ENCODE measurements at regions of chr5 and their contacts with region 1.

Region 1: DNA sequence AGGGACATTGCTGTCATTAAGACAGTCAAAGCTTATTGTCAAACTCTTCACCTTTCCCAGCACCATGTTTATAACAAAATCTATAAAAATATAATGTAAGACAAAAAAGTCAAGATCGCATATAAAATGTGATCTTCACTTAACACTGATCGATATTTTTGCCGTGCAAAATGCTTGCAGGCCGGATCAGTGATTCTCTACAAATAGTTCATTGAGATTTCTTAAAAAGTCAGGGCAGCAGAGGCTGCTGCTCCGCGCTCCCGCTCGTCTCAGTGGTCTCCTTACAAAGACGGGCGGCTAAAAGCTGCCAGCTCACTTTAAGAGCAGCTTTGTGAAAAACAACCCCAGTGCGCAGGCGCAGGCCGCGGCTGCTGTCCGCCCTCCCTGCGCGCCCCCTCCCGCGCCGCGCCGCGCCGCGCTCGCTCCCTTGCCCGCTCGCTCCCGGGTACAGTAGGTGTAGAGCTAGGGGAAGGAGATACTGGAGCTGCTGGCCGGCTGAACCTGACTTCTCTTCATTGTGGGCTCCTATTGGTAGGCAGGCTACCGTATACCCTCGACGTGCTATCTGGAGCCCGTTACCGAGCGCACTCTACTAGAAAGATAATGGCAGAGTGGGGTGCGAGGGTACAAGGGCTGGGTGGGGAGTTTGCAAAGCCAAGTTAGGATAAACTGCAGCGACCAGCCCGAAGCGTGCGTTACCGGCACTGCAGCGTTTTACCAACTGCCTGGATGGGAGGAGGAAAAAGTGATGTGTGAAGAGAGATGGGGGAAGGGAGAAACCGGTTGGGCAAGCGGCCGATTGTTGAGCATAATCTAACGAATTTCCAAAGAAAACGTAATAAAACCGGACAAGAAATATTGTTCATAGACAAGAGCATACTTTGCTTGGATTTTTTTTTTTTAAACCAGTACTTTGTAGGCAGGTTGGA is at the start of gene ARRDC3:
- DNase-seq: peak; percentile 96
- H3K4me3 Mint-ChIP-seq: peak within 1 kb of the TSS; percentile 98
- H3K27ac Mint-ChIP-seq: peak within 1 kb of the TSS; percentile 100
- H3K4me1 Mint-ChIP-seq: peaks cover 35% of the 10 kb centered on the region
- H3K27me3 Mint-ChIP-seq: peaks cover 3% of the 10 kb centered on the region
- total RNA-seq, gene ARRDC3: 10.5 and 11.5 TPM in 2 replicates

Region 2: GRCh38 chr5:90474235-90475109 is 908.8 kb before region 1 on chr5 and contains the starts of genes MBLAC2 and POLR3G:
- intact Hi-C with region 1: loop called (anchors 1 kb)
- DNase-seq: peak; percentile 87
- H3K4me3 Mint-ChIP-seq: peak within 1 kb of the TSS; percentile 98
- H3K27ac Mint-ChIP-seq: peak within 1 kb of the TSS; percentile 97
- H3K4me1 Mint-ChIP-seq: peaks cover 44% of the 10 kb centered on the region
- H3K27me3 Mint-ChIP-seq: no peaks in the 10 kb centered on the region
- total RNA-seq, gene MBLAC2: 5.0 and 5.7 TPM in 2 replicates
- total RNA-seq, gene POLR3G: 18.4 and 22.1 TPM in 2 replicates

Region 3: GRCh38 chr5:90932052-90932699 is 451.1 kb before region 1 on chr5:
- intact Hi-C with region 1: loop called (anchors 1 kb)
- DNase-seq: no peak
- H3K4me3 Mint-ChIP-seq: no peak overlapping the region
- H3K27ac Mint-ChIP-seq: no peak overlapping the region
- H3K4me1 Mint-ChIP-seq: peaks cover 5% of the 10 kb centered on the region
- H3K27me3 Mint-ChIP-seq: peaks cover 6% of the 10 kb centered on the region

Region 4: DNA sequence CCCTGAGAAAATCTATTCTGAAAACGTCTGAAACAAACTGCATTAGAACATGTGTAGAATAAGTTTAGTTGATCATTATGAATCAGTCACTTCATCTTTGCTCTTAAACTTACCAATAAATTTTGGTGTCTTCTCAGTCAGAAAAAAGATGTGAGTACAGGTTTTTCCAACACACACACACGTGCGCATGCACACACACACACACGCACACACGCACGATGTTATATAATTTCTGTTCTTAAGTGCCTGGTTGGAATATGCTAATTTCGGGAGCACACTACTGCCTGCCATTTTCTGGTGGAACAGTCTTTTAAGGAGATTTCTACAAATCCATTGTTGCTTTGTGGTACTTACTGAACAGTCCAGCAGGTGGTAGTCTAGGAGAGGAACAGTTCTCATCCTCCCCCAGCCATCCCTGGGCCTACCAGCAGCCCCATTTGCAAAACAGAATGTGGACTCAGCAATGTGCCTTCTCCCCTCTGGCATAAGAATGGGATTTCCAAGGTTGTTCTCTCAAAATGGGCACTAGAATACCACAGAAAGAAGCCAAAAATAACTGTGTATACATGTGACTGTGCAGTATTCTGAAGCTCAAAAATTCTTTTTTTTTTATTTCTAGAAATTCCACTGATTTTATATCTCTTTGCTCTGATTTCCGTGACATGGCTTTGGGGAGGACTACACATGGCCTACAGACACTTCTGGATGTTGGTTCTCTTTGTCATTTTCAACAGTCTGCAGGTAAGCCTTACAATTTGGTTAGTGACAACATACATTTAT is 281.5 kb before region 1 on chr5:
- intact Hi-C with region 1: loop called (anchors 1 kb)
- DNase-seq: peak; percentile 25
- H3K4me3 Mint-ChIP-seq: no peak overlapping the region
- H3K27ac Mint-ChIP-seq: no peak overlapping the region
- H3K4me1 Mint-ChIP-seq: no peaks in the 10 kb centered on the region
- H3K27me3 Mint-ChIP-seq: peaks cover 12% of the 10 kb centered on the region

Region 5: GRCh38 chr5:91225848-91226686 is 157.2 kb before region 1 on chr5:
- intact Hi-C with region 1: loop called (anchors 1 kb)
- DNase-seq: peak; percentile 33
- H3K4me3 Mint-ChIP-seq: no peak overlapping the region
- H3K27ac Mint-ChIP-seq: no peak overlapping the region
- H3K4me1 Mint-ChIP-seq: peaks cover 6% of the 10 kb centered on the region
- H3K27me3 Mint-ChIP-seq: peaks cover 20% of the 10 kb centered on the region

Region 6: DNA sequence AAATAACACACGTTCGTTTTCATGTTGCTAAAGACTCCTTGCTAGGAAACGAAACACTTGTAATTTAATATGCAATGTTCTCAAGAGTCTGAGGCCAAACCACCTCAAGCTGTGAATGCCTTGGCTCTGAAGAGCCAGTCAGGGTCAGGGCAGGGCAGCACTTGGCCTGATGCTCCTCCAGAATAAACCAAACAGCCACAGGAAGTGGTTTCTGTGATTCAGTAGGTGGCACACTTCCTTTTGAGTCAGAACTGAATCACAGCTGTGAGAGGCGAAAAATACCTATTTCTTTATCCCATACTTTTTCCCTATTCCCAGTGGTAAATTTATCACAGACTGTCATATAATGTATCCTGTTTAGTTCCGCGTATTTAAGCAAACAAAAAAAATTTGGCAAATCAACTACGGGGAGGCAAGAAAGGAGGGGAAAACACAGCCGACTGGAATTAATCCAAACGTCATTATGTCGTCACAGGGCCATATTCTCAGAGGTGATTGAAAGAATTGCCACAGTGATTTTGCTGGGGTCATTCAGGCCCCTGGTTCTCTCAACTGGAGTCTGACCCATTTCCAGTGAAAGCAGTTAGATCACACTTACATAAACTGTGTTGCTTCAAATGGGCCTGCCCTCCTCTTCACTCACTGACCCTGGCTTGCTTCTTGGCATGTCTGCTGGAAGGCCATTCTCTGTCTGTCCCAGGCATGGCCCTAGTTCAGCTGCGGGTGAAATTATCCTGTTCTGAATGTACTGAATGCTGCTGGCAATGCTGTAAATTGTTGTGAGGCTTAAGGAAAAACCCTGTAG is 71.4 kb before region 1 on chr5:
- intact Hi-C with region 1: loop called (anchors 1 kb)
- DNase-seq: peak; percentile 60
- H3K4me3 Mint-ChIP-seq: peak overlapping the region; percentile 77
- H3K27ac Mint-ChIP-seq: peak overlapping the region; percentile 87
- H3K4me1 Mint-ChIP-seq: peaks cover 46% of the 10 kb centered on the region
- H3K27me3 Mint-ChIP-seq: no peaks in the 10 kb centered on the region

Region 7: GRCh38 chr5:91419571-91420537 is 36.6 kb after region 1 on chr5:
- intact Hi-C with region 1: loop called (anchors 1 kb)
- DNase-seq: peak; percentile 40
- H3K4me3 Mint-ChIP-seq: no peak overlapping the region
- H3K27ac Mint-ChIP-seq: no peak overlapping the region
- H3K4me1 Mint-ChIP-seq: peaks cover 4% of the 10 kb centered on the region
- H3K27me3 Mint-ChIP-seq: peaks cover under 1% of the 10 kb centered on the region

Region 8: GRCh38 chr5:92106808-92107207 is 723.5 kb after region 1 on chr5:
- intact Hi-C with region 1: no loop called
- DNase-seq: no peak
- H3K4me3 Mint-ChIP-seq: no peak overlapping the region
- H3K27ac Mint-ChIP-seq: no peak overlapping the region
- H3K4me1 Mint-ChIP-seq: no peaks in the 10 kb centered on the region
- H3K27me3 Mint-ChIP-seq: no peaks in the 10 kb centered on the region

Region 9: DNA sequence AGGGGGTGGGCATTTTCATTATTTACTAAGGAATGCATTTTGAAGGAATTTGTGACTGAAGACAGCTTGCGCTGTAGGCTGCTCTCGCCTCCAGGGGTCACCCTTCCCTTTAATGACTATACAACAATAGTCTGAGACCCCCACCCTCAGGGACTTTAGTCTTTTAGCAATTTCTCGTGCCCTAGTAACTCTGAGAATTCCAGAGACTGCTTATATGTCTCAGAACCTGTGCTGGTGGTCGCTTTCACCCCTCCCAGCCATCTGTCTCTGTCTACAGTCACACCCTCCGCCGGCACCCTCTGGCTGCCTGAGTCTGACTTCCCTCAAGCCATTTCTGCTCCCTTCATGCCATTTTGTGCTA is 1526.3 kb after region 1 on chr5:
- intact Hi-C with region 1: no loop called
- DNase-seq: no peak
- H3K4me3 Mint-ChIP-seq: no peak overlapping the region
- H3K27ac Mint-ChIP-seq: no peak overlapping the region
- H3K4me1 Mint-ChIP-seq: no peaks in the 10 kb centered on the region
- H3K27me3 Mint-ChIP-seq: peaks cover 2% of the 10 kb centered on the region